SK-N-SH (cell line): ENCODE measurements at regions of chr16 and their contacts with region 1.

Region 1: GRCh38 chr16:87278191-87279095 is 38.7 kb downstream of the C16orf95 start:
- DNase-seq: peak; percentile 91
- H3K4me3 ChIP-seq: no peak overlapping the region; a peak in 1 of 4 replicates
- H3K27ac ChIP-seq: no peak overlapping the region
- H3K4me1 ChIP-seq: no peaks in the 10 kb centered on the region; a peak in 1 of 4 replicates
- H3K27me3 ChIP-seq: no peaks in the 10 kb centered on the region
- CTCF ChIP-seq: peak; percentile 92
- EP300 ChIP-seq: no peak
- RAD21 ChIP-seq: peak; percentile 91

Region 2: GRCh38 chr16:86563489-86564345 is 714.7 kb before region 1 on chr16:
- CTCF ChIA-PET with region 1: interaction called, 25 read pairs
- POLR2A ChIA-PET with region 1: no interaction called
- DNase-seq: peak; percentile 92
- H3K4me3 ChIP-seq: peak overlapping the region; percentile 25 to 58; a peak in 3 of 4 replicates
- H3K27ac ChIP-seq: no peak overlapping the region
- H3K4me1 ChIP-seq: no peaks in the 10 kb centered on the region; a peak in 1 of 4 replicates
- H3K27me3 ChIP-seq: peaks cover 23% of the 10 kb centered on the region; the same call in 1 of the 2 replicates
- CTCF ChIP-seq: peak; percentile 100
- EP300 ChIP-seq: no peak
- RAD21 ChIP-seq: peak; percentile 99

Region 3: GRCh38 chr16:87203060-87203656 is 75.3 kb before region 1 on chr16:
- CTCF ChIA-PET with region 1: interaction called, 79 read pairs
- POLR2A ChIA-PET with region 1: no interaction called
- DNase-seq: peak; percentile 84
- H3K4me3 ChIP-seq: peak overlapping the region in 1 of 2 experiments; percentile 39; a peak in 1 of 4 replicates
- H3K27ac ChIP-seq: no peak overlapping the region
- H3K4me1 ChIP-seq: peaks cover 0 to 2% of the 10 kb centered on the region in 2 experiments; a peak in 1 of 4 replicates
- H3K27me3 ChIP-seq: peaks cover 19% of the 10 kb centered on the region; the same call in 1 of the 2 replicates
- CTCF ChIP-seq: peak; percentile 89
- EP300 ChIP-seq: no peak
- RAD21 ChIP-seq: peak; percentile 67

Region 4: DNA sequence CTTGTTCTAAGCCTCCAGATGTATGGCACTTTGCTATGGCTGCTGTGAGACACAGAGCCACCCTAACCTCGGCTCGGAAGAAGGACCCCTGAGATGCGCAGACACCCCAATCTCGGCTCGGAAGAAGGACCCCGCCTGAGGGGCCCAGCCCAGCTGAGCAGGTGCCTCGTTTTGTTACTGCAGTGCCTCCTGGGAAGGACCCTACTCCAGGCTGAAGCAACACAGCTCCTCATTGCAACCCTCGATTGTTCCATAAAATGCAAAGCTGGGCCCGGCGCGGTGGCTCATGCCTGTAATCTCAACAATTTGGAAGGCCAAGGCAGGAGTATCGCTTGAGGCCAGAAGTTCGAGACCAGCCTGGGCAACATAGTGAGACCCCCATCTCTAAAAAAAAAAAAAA is 22.6 kb before region 1 on chr16:
- CTCF ChIA-PET with region 1: interaction called, 26 read pairs
- POLR2A ChIA-PET with region 1: interaction called, 3 read pairs
- DNase-seq: no peak
- H3K4me3 ChIP-seq: no peak overlapping the region
- H3K27ac ChIP-seq: no peak overlapping the region
- H3K4me1 ChIP-seq: no peaks in the 10 kb centered on the region
- H3K27me3 ChIP-seq: peaks cover 6% of the 10 kb centered on the region
- CTCF ChIP-seq: no peak
- EP300 ChIP-seq: no peak
- RAD21 ChIP-seq: no peak

Region 5: GRCh38 chr16:87263471-87263961 is 14.9 kb before region 1 on chr16:
- CTCF ChIA-PET with region 1: interaction called, 26 read pairs
- POLR2A ChIA-PET with region 1: no interaction called
- DNase-seq: no peak
- H3K4me3 ChIP-seq: no peak overlapping the region
- H3K27ac ChIP-seq: no peak overlapping the region
- H3K4me1 ChIP-seq: no peaks in the 10 kb centered on the region; a peak in 1 of 4 replicates
- H3K27me3 ChIP-seq: 0 out of 2 replicates have a peak, but pooled peaks cover 6% of the 10 kb centered on the region
- CTCF ChIP-seq: no peak
- EP300 ChIP-seq: no peak
- RAD21 ChIP-seq: no peak